CD8-positive, alpha-beta memory T cell (primary cell): ENCODE measurements at regions of chr19 and their contacts with region 1.

Region 1: DNA sequence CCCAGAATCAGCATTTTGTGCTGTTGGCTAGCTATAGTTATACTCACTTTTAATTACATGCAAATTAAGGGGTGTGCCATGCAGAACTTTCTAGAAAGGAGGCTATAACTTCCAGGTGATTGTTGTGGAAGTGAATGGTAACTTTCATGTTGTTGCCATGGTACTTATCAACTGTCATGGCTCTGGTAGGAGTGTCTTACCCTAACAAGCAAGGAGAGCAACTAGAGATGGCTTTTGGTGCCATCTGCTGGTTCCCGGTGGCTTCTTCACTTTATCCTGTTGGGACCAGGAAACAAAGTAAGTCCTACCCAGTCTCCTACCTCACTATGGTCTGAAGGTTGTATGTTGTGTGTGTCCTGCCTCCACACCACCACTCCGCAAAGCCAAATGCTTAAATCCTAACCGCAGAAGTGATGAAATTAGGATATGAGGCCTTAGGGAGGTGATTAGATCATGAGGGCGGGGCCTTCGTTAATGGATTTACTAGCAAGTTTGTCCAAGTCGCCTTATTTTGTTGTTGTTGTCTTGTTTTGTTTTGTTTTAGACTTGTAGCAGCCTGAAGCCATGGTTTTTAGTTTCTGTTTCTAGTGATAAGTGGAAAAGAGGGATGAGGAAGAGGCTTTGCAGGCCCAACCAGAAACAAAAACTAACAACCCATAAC is 22.6 kb downstream of the FBXL12 start:
- DNase-seq: peak; percentile 67 to 91 (median 86)
- H3K4me3 ChIP-seq: no peak overlapping the region
- H3K4me3 Mint-ChIP-seq: peak overlapping the region in 1 of 7 donors; percentile 88
- H3K27ac ChIP-seq: peak overlapping the region; percentile 47
- H3K27ac Mint-ChIP-seq: peak overlapping the region; percentile 43 to 97 (median 90)
- H3K4me1 ChIP-seq: peaks cover 17% of the 10 kb centered on the region
- H3K4me1 Mint-ChIP-seq: peaks cover 26 to 33% (median 29%) of the 10 kb centered on the region in 3 donors
- H3K27me3 ChIP-seq: no peaks in the 10 kb centered on the region
- H3K27me3 Mint-ChIP-seq: no peaks in the 10 kb centered on the region

Region 2: GRCh38 chr19:9205501-9206113 is 590.6 kb before region 1 on chr19:
- CTCF ChIA-PET with region 1: interaction called, 11 read pairs
- POLR2A ChIA-PET with region 1: no interaction called
- DNase-seq: peak; percentile 37 to 74 (median 43)
- H3K4me3 ChIP-seq: no peak overlapping the region
- H3K4me3 Mint-ChIP-seq: peak overlapping the region; percentile 5 to 70 (median 56)
- H3K27ac ChIP-seq: no peak overlapping the region
- H3K27ac Mint-ChIP-seq: peak overlapping the region in 2 of 8 donors; percentile 47 to 84
- H3K4me1 ChIP-seq: no peaks in the 10 kb centered on the region
- H3K4me1 Mint-ChIP-seq: peaks cover 0 to 8% (median 6%) of the 10 kb centered on the region in 3 donors
- H3K27me3 ChIP-seq: no peaks in the 10 kb centered on the region
- H3K27me3 Mint-ChIP-seq: peaks cover 10 to 26% of the 10 kb centered on the region in 2 donors

Region 3: DNA sequence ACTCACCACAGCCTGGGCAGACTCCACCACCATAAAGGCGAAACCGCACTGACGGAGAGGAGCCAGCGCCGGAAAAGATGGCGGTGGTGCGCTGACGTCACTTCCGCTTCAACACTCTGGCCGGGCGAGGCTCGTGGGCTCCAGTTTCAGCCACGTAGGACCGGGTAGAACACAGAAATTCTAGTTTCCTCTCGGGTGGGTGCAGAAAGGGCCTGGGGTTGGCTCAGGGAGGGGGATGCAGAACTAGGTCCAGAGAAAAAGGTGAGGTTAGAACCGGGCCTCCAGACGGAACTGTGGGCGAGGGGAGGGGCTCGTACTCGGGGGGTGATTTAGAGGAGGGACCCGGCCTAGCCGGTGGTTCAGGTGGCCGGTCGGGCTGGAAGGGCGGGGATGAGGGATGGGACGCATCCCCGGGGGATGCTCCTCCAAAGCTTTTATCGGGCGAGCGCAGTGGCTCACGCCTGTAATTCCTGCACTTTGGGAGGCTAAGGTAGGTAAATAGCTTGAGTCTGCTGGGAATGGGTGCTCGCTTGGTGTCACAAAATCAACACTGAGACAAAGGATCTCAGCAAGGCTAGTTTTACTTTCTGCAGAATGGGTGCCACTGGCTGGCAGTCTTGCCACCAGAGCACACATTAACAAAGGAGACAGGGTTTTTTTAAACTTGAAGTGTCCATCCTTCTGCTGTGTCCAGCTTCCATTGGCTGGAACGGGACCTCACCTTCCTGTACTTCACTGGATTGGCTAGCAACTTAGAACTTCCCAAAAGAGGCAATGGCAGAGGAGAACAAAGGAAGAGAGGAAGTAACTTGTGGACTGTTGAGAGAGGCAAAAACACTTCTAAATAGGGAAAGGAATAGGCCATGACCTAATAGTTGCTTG is 174.8 kb before region 1 on chr19 and contains the start of gene ZNF561:
- CTCF ChIA-PET with region 1: interaction called, 11 read pairs
- POLR2A ChIA-PET with region 1: no interaction called
- DNase-seq: peak; percentile 85 to 94 (median 90)
- H3K4me3 ChIP-seq: peak within 1 kb of the TSS; percentile 83
- H3K4me3 Mint-ChIP-seq: peak within 1 kb of the TSS; percentile 94 to 100 (median 98)
- H3K27ac ChIP-seq: peak within 1 kb of the TSS; percentile 96
- H3K27ac Mint-ChIP-seq: peak within 1 kb of the TSS; percentile 99 to 100 (median 100)
- H3K4me1 ChIP-seq: peaks cover 22% of the 10 kb centered on the region
- H3K4me1 Mint-ChIP-seq: peaks cover 22 to 41% (median 25%) of the 10 kb centered on the region in 3 donors
- H3K27me3 ChIP-seq: no peaks in the 10 kb centered on the region
- H3K27me3 Mint-ChIP-seq: peaks cover 0 to 4% of the 10 kb centered on the region in 2 donors
- total RNA-seq, gene ZNF561: 35.9 to 43.5 TPM

Region 4: DNA sequence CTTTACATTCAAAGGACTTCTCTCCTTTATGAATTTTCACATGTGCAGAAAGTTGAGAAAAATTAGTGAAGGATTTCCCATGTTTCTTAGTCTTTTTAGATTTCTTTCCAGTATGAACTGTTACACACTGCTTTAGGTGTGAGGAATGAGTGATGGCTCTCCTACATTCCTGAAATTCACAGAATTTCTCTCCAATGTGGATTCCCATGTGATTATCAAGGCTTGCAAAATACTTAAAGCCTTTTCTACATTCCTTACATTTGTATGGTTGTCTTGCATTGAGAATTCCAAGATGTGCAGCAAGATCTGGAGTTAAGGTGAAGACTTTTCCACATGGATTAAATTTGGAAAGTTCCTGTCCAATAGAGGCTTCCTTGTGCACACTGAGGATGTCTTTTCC is 105.5 kb before region 1 on chr19:
- CTCF ChIA-PET with region 1: no interaction called
- POLR2A ChIA-PET with region 1: no interaction called
- DNase-seq: no peak
- H3K4me3 ChIP-seq: no peak overlapping the region
- H3K4me3 Mint-ChIP-seq: no peak overlapping the region
- H3K27ac ChIP-seq: no peak overlapping the region
- H3K27ac Mint-ChIP-seq: no peak overlapping the region
- H3K4me1 ChIP-seq: no peaks in the 10 kb centered on the region
- H3K4me1 Mint-ChIP-seq: no peaks in the 10 kb centered on the region
- H3K27me3 ChIP-seq: no peaks in the 10 kb centered on the region
- H3K27me3 Mint-ChIP-seq: peaks cover 5 to 30% of the 10 kb centered on the region in 2 donors

Region 5: GRCh38 chr19:9735986-9736385 is 60.3 kb before region 1 on chr19:
- CTCF ChIA-PET with region 1: no interaction called
- POLR2A ChIA-PET with region 1: no interaction called
- DNase-seq: no peak
- H3K4me3 ChIP-seq: no peak overlapping the region
- H3K4me3 Mint-ChIP-seq: no peak overlapping the region
- H3K27ac ChIP-seq: no peak overlapping the region
- H3K27ac Mint-ChIP-seq: no peak overlapping the region
- H3K4me1 ChIP-seq: no peaks in the 10 kb centered on the region
- H3K4me1 Mint-ChIP-seq: no peaks in the 10 kb centered on the region
- H3K27me3 ChIP-seq: no peaks in the 10 kb centered on the region
- H3K27me3 Mint-ChIP-seq: peaks cover 0 to 2% of the 10 kb centered on the region in 2 donors

Region 6: GRCh38 chr19:9768175-9769112 is 27.8 kb before region 1 on chr19 and contains the start of gene ZNF846:
- CTCF ChIA-PET with region 1: interaction called, 3 read pairs
- POLR2A ChIA-PET with region 1: interaction called, 12 read pairs
- DNase-seq: peak; percentile 84 to 94 (median 90)
- H3K4me3 ChIP-seq: peak within 1 kb of the TSS; percentile 87
- H3K4me3 Mint-ChIP-seq: peak within 1 kb of the TSS; percentile 97 to 100 (median 97)
- H3K27ac ChIP-seq: peak within 1 kb of the TSS; percentile 92
- H3K27ac Mint-ChIP-seq: peak within 1 kb of the TSS; percentile 99
- H3K4me1 ChIP-seq: peaks cover 11% of the 10 kb centered on the region
- H3K4me1 Mint-ChIP-seq: peaks cover 8 to 16% (median 9%) of the 10 kb centered on the region in 3 donors
- H3K27me3 ChIP-seq: no peaks in the 10 kb centered on the region
- H3K27me3 Mint-ChIP-seq: no peaks in the 10 kb centered on the region
- total RNA-seq, gene ZNF846: 5.1 to 5.9 TPM

Region 7: GRCh38 chr19:9806803-9807202 is 10.6 kb after region 1 on chr19:
- CTCF ChIA-PET with region 1: interaction called, 10 read pairs
- POLR2A ChIA-PET with region 1: no interaction called
- DNase-seq: no peak
- H3K4me3 ChIP-seq: no peak overlapping the region
- H3K4me3 Mint-ChIP-seq: peak overlapping the region in 1 of 7 donors; percentile 6
- H3K27ac ChIP-seq: no peak overlapping the region
- H3K27ac Mint-ChIP-seq: peak overlapping the region in 7 of 8 donors; percentile 47 to 85 (median 68)
- H3K4me1 ChIP-seq: peaks cover 46% of the 10 kb centered on the region
- H3K4me1 Mint-ChIP-seq: peaks cover 25 to 42% (median 29%) of the 10 kb centered on the region in 3 donors
- H3K27me3 ChIP-seq: no peaks in the 10 kb centered on the region
- H3K27me3 Mint-ChIP-seq: peaks cover 0 to 1% of the 10 kb centered on the region in 2 donors

Region 8: DNA sequence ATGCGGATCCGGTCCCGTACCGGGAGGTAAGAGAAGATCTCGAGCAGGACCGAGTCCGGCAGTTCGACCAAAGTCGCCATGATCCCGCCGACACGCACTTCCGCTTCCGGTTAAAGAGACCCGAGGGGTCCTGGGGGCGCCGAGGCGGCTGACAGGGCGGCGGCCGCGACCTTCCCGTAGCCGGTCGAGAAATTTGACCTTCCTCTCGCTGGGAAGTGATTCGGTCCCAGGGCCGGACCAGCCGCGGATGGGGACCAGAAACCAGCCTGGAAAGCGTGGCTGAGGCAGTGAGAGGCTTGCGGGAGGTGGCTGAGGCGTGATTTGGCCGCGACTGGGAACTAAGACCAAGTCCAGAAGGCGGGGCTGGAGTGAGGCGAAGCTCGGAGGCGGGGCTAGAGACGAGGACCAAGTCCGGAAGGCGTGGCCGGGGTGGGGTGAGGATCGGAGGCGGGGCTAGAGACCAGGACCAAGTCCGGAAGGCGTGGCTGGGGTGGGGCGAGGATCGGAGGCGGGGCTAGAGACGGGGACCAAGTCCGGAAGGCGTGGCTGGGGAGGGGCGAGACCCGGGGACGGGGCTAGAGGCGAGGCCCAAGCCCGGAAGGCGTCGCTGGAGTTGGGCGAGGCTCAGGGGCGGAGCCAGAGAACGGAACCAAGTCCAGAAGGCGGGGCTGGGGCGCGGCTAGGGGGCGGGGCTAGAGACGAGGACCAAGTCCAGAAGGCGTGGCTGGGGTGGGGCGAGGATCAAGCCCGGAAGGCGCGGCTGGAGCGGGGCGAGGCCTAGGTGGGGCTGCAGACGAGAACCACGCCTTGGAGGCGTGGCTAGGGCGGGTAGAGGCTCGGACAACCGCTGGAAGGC is 22.7 kb after region 1 on chr19 and contains the start of gene FBXL12:
- CTCF ChIA-PET with region 1: interaction called, 5 read pairs
- POLR2A ChIA-PET with region 1: interaction called, 10 read pairs
- DNase-seq: peak; percentile 100
- H3K4me3 ChIP-seq: peak within 1 kb of the TSS; percentile 95
- H3K4me3 Mint-ChIP-seq: peak within 1 kb of the TSS; percentile 84 to 96 (median 89)
- H3K27ac ChIP-seq: peak within 1 kb of the TSS; percentile 98
- H3K27ac Mint-ChIP-seq: peak within 1 kb of the TSS; percentile 78 to 97 (median 96)
- H3K4me1 ChIP-seq: peaks cover 24% of the 10 kb centered on the region
- H3K4me1 Mint-ChIP-seq: peaks cover 28 to 48% (median 36%) of the 10 kb centered on the region in 3 donors
- H3K27me3 ChIP-seq: no peaks in the 10 kb centered on the region
- H3K27me3 Mint-ChIP-seq: no peaks in the 10 kb centered on the region
- total RNA-seq, gene FBXL12: 24.6 to 25.3 TPM

Region 9: DNA sequence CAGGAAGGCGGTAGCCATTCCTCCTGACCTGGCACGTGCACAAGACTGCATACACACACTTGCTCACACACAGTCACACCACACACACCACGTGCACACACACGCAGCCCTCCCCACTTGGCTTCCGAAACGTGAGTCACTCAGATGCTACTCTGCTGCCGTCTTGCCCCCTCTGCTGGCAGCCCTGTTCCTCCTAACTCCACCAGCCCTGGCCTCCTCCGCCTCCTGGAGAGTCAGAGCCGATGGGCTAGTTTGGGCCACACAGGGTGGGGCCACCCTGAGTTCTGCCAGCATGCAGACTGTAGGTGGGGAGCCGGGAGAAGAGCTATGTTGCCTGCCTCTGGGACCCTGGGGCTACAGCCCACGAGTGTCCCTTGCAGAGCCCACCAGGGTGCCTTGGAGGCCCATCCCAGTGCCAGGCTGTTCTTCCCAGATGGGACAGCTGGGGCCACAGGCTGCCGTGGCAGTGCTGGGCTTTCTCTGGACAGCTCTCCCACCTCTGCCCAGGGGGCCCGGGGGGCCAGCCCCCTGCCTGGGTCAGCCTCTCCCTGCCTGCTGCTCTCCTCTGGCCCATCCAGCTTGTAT is 50.9 kb after region 1 on chr19:
- CTCF ChIA-PET with region 1: no interaction called
- POLR2A ChIA-PET with region 1: no interaction called
- DNase-seq: no peak
- H3K4me3 ChIP-seq: no peak overlapping the region
- H3K4me3 Mint-ChIP-seq: no peak overlapping the region
- H3K27ac ChIP-seq: no peak overlapping the region
- H3K27ac Mint-ChIP-seq: peak overlapping the region in 1 of 8 donors; percentile 61
- H3K4me1 ChIP-seq: peaks cover 17% of the 10 kb centered on the region
- H3K4me1 Mint-ChIP-seq: peaks cover 13 to 42% (median 14%) of the 10 kb centered on the region in 3 donors
- H3K27me3 ChIP-seq: no peaks in the 10 kb centered on the region
- H3K27me3 Mint-ChIP-seq: no peaks in the 10 kb centered on the region

Region 10: DNA sequence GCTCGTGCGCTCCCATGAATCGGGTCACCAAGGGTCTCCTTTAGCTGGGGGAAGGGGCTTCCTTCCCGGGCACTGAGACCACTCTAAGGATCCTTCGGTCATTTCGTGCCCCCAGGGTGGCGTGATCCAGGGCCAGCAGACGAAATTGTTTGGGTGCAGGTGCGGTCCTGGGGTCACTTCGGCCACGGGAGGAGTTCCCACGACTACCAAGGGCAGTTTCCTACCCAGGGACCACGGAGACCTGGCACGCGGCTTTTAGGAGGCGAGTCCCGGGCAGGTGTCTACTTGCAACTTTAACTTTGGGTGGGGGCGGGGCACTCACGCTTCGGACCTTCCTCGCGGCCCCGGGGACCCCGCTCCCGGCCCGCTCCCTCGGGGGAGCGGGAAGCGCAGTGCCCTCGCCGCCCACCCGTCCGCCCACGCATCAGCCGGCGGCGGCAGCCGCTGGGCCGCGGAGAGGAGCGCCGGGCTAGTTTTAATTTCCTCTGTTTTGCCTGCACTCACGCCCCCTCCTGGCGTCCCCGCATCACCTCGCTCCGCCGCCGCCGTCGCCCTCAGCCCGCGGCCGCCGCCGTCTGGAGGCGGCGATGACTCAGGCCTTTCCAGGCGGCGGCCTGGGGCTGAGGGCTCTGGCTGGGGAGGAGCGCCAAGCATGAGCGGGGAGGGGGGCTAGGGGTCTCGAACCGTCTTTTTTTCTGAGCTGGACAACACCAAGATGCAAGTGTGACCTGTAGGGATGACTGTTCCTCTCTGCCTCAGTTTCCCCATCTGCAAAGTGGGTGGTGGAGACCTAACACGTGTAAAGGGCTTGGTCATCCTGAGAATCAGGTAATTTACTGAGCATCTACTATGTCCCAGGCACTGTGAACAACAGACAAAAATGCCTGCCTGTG is 118.3 kb after region 1 on chr19:
- CTCF ChIA-PET with region 1: no interaction called
- POLR2A ChIA-PET with region 1: no interaction called
- DNase-seq: peak; percentile 67 to 85 (median 74)
- H3K4me3 ChIP-seq: peak overlapping the region; percentile 69
- H3K4me3 Mint-ChIP-seq: peak overlapping the region in 6 of 7 donors; percentile 59 to 78 (median 76)
- H3K27ac ChIP-seq: peak overlapping the region; percentile 31
- H3K27ac Mint-ChIP-seq: peak overlapping the region in 2 of 8 donors; percentile 47 to 77
- H3K4me1 ChIP-seq: peaks cover 7% of the 10 kb centered on the region
- H3K4me1 Mint-ChIP-seq: peaks cover 5 to 12% (median 9%) of the 10 kb centered on the region in 3 donors
- H3K27me3 ChIP-seq: no peaks in the 10 kb centered on the region
- H3K27me3 Mint-ChIP-seq: peaks cover 18 to 36% of the 10 kb centered on the region in 2 donors